GM18951 (cell line): ENCODE measurements at regions of chr1 and their contacts with region 1.

Region 1: DNA sequence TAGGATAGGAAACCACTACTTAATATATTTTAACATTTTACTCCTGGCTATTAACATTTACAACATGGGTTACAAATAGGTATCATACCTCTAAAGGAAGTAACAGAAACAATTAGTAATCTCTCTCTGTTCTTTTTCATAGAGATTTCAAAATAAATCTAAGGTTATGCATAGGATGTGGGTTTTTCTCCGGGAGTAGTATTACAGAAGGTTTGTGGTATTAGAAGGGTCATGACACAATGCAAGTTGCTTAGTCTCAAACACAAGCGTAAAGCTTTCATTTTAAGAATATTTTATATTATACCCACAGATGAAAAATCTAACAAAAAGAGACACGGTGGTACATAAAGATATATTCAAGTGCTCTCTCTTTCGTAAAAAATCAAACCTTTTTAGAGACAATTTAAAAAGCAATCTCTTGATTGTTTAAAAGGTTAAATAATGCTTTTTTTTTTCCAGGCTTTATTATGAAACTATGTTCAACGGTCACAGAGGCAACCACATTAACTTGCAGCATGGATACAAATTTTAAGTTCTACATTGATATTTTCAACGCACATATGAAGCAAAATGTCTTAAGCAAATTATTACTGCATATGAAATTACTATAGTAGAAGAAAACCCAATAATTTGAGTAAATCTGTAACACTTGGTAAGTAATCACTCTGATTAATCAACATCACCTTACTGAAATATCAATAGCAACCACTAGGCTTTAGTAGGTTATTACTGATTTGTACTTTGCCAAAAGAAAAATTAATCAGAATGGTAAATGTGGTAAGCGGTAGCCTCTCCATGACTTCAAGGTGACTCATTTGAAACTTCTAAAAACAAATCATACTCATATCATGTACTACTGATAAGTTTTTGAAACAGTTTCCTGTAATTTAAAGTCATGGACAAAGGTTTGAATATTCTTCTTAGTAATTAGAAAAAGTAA is 97.4 kb upstream of the GFI1 start:
- POLR2A ChIP-seq: no peak

Region 2: DNA sequence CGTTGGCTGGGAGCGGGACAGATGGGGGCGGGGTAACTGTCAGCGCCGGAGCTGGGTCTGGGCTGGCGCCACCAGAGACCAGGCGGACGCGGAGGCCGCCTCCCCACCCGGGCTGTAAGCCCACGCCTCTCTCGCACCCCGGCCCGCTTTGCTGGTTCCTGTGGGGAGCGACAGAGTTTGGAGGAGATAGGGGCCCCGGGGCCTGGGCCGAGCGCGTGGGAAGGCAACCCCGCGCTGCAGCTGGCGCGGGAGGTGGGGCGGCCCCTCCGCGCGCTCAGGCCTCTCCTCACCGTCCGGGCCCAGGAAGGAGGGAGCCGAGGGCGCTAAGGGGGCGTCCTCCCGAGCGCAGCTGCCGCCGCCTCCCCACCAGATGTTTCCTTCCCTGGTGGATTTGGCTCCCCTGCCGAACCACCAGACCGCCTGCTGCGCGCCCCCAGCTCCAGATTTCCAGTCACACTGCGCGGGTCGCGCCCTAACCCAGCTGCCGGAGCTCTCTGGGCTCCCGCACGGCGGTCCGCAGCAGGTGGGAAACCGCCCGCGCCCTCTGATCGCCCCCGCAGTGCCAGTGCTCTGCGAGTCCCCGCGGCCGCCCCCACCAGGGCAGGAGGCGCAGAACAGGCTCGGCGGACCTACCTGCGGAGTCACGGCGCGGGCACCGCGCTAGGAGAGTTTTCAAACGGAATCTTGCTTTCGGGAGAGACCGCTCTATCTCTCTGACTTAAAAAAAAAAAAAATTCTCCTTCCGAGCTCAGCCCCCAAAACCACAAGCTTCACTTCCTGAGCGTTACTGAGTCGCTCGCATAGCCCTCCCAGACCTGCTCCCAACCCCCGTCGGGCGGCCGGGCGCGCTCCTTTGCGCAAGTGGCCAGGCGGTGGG is 98.5 kb before region 1 on chr1:
- in situ Hi-C with region 1: loop called (anchors 10 kb)
- POLR2A ChIP-seq: peak; percentile 58

Region 3: DNA sequence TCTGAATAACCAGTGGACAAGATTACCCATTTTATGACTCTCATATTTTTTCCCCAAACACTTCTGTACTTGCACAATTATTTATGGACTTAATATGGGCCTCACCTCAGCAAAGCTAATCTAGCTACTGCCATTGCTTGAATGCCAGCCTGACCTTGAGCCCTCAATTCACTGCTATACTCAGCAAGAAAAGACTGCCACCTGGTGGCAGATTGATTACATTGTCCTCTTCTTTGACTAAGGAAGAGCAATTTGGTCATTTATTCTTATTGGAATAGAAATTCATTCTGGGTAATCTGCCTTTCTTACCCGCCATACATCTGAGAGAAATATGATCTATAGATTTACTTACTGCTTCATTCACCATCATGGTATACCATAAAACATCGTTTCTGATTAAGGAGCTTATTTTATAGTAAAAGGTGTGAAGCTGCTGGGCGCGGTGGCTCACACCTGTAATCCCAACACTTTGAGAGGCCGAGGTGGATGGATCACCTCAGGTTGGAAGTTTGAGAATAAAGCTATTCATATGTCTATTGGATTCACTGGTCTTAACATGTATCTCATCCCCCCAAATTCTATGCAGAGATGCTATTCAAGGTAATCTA is 410.1 kb after region 1 on chr1:
- in situ Hi-C with region 1: no loop called
- POLR2A ChIP-seq: no peak